A549 (cell line): ENCODE measurements at regions of chr2 and their contacts with region 1.

Region 1: DNA sequence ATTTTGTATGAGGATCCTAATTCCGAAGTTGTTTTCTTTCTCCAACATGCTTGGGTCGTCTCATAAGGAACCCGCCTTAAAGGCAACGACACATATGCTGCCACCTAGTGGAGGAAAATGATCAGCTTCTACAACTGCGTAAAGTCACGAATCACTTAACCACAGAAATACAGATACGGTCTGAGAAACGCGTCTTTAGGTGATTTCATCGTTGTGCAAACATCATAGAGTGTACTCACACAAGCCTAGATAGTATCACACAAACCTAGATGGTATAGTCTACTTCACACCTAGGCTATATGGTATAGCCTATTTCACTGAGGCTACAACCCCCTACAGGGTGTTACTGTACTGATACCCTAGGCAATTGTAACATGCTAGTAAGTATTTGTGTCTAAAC is 13.1 kb downstream of the GNLY start:
- DNase-seq: peak; percentile 92 to 96
- ATAC-seq: peak; percentile 82 to 94
- H3K4me3 ChIP-seq: no peak overlapping the region
- H3K27ac ChIP-seq: peak overlapping the region; percentile 84; a peak in 5 of 6 replicates
- H3K4me1 ChIP-seq: peaks cover 56% of the 10 kb centered on the region
- CTCF ChIP-seq: peak; percentile 98
- EP300 ChIP-seq: no peak
- POLR2A ChIP-seq: no peak
- RAD21 ChIP-seq: peak; percentile 86 to 89

Region 2: DNA sequence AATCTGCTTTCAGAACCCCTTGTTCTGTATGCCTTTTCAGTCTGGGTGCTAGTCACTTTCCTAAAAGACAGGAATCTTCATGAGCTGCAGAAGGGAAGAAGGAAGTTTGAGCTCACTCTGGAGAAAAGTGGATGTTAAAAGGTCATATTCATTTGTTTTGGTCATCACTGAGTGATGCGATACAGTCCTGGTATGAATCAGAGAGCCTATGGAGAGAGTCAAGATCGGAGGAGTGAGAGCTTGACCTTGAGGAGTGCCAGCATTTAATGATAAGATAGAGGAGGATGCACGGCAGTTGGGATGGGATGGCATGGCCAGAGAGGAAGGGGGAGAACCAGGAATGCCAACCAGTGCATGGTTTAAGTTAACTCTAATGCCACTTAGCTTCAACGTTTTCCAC is 71.7 kb before region 1 on chr2:
- CTCF ChIA-PET with region 1: interaction called, 241 read pairs
- POLR2A ChIA-PET with region 1: interaction called, 4 read pairs
- DNase-seq: no peak
- ATAC-seq: no peak
- H3K4me3 ChIP-seq: no peak overlapping the region
- H3K27ac ChIP-seq: no peak overlapping the region
- H3K4me1 ChIP-seq: peaks cover 3% of the 10 kb centered on the region; the same call in 1 of the 3 replicates
- CTCF ChIP-seq: no peak
- EP300 ChIP-seq: no peak
- POLR2A ChIP-seq: no peak
- RAD21 ChIP-seq: no peak

Region 3: GRCh38 chr2:85653996-85654395 is 53.3 kb before region 1 on chr2:
- CTCF ChIA-PET with region 1: interaction called, 111 read pairs
- POLR2A ChIA-PET with region 1: no interaction called
- DNase-seq: no peak
- ATAC-seq: no peak
- H3K4me3 ChIP-seq: no peak overlapping the region
- H3K27ac ChIP-seq: peak overlapping the region in 1 of 2 experiments; percentile 91; a peak in 2 of 6 replicates
- H3K4me1 ChIP-seq: peaks cover 79% of the 10 kb centered on the region
- CTCF ChIP-seq: no peak
- EP300 ChIP-seq: no peak
- POLR2A ChIP-seq: no peak
- RAD21 ChIP-seq: no peak

Region 4: DNA sequence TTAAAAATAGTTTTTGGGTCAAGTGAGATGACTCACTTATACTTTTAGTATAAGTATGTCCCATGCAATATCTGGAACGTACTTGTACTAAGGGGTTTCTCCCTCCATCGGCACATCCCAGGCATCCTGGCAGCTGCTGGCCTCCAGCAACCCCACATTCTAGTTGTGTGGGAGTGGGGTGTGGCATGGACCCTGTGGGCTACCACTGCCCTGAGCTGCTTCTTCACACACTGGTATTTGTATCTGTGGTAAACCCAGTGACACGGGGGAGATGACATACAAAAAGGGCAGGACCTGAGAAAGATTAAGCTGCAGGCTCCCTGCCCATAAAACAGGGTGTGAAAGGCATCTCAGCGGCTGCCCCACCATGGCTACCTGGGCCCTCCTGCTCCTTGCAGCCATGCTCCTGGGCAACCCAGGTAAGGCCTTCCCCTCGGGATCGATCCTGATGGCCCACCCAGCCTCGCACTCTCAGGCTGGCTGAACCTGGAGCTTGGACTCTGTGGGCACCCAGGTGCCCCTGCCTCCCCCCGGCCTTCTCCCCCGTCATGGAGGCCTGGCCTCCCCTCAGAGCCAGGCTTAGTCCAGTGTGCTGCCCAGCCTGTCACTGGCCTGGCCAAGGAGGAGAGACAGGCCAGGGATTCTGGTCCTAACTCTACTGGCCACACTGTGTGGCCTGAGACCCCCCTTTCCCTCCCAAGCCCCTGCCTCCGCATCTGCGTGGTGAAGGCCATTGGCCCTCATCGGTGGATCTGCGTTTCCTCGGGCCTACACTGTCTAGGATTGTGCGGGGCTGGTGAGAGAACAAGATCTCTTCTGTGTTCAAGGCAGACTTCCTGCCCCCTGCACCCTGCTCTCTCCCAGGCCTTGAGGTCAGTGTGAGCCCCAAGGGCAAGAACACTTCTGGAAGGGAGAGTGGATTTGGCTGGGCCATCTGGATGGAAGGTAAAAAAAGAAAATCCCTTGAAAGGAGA is 13.0 kb before region 1 on chr2 and contains the start of gene GNLY:
- CTCF ChIA-PET with region 1: interaction called, 135 read pairs
- POLR2A ChIA-PET with region 1: no interaction called
- DNase-seq: no peak
- ATAC-seq: no peak; a peak in 1 of 6 replicates
- H3K4me3 ChIP-seq: no peak within 1 kb of the TSS
- H3K27ac ChIP-seq: peak within 1 kb of the TSS in 1 of 2 experiments; percentile 47; a peak in 3 of 6 replicates
- H3K4me1 ChIP-seq: peaks cover 7% of the 10 kb centered on the region; the same call in 1 of the 3 replicates
- CTCF ChIP-seq: no peak
- EP300 ChIP-seq: no peak
- POLR2A ChIP-seq: no peak
- RAD21 ChIP-seq: no peak
- polyA plus RNA-seq, gene GNLY: not detected in 2 replicates